ENCODE measurements at regions of chr1 and their contacts with region 1.

Region 1: DNA sequence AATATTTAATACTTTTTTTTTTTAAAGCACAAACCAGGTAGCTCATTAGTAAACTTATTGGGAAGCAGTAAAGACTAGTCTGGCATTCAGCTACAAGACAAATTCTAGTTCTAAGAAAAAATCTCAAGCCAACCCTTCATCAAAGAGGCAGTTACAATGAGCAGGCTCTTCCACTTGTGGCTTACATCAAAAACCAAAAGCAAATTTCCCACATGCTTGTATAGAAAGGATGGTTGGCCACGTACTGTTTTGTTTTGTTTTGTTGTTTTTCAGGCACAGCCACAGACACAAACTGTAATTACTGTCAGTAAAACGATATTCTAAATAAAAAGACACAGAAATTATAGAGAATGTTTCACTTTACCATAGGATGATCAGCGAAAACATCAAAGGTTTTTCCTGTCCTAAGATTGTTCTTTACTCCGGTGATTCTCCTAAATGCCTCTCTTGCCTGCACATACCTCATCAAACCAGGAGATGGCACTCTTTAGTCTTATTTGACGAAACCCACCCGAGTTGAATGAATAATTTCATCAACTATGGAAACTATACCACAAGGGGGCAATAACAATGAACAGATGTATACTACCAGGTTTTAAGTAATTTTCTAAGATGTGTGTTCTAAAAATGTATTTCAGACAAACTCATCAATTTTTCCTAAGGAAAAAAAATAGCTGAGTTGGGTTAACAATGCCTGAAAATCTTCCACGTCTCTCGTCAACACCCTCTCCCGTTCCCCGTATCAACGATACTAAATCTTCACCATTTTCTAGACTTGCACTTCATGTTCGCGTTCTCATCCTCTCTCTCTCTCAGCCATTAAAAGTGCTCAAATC is 26.9 kb downstream of the RPL5 start:
- DNase-seq: peak; percentile 62
- H3K4me3 ChIP-seq: no peak overlapping the region
- H3K27ac ChIP-seq: no peak overlapping the region
- H3K27me3 ChIP-seq: no peaks in the 10 kb centered on the region
- CTCF ChIP-seq: peak; percentile 92

Region 2: DNA sequence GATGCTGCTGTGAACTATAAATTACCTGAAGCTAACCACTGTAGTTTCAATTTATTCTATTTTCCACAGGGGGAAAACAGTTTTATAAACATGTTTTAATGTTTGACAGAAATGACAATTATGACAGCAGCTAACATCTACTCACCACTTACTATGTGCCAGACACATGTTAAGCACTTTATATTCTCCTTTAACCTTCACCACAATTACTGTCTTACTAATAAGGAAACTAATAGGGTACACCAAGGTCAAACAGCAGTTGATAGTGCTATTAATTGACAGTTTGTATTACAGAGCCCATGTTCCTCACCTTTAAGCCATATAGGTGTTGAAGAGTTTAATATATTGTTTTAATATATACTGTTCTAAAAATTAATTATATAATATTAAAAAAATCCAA is 220.3 kb before region 1 on chr1:
- CTCF ChIA-PET with region 1: no interaction called
- POLR2A ChIA-PET with region 1: no interaction called
- DNase-seq: no peak
- H3K4me3 ChIP-seq: no peak overlapping the region
- H3K27ac ChIP-seq: no peak overlapping the region
- H3K27me3 ChIP-seq: no peaks in the 10 kb centered on the region
- CTCF ChIP-seq: no peak

Region 3: DNA sequence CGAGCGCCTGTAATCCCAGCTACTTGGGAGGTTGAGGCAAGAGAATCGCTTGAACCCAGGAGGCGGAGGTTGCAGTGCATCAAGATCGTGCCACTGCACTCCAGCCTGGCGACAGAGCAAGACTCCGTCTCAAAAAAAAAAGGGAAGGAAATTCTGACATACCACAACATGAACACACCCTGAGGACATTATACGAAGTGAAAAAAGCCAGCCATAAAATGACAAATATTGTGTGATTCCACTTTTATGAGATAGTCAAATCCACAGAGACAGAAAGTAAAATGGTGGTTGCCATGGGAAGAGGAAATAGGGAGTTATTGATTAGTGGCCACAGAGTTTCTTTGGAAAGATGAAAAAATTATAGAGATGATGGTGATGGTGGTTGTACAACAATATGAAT is 115.6 kb before region 1 on chr1:
- CTCF ChIA-PET with region 1: no interaction called
- POLR2A ChIA-PET with region 1: no interaction called
- DNase-seq: no peak
- H3K4me3 ChIP-seq: no peak overlapping the region
- H3K27ac ChIP-seq: no peak overlapping the region
- H3K27me3 ChIP-seq: no peaks in the 10 kb centered on the region
- CTCF ChIP-seq: no peak

Region 4: GRCh38 chr1:92872719-92873118 is 13.9 kb after region 1 on chr1:
- CTCF ChIA-PET with region 1: interaction called, 37 read pairs
- POLR2A ChIA-PET with region 1: no interaction called
- DNase-seq: no peak
- H3K4me3 ChIP-seq: no peak overlapping the region
- H3K27ac ChIP-seq: no peak overlapping the region
- H3K27me3 ChIP-seq: no peaks in the 10 kb centered on the region
- CTCF ChIP-seq: no peak

Region 5: GRCh38 chr1:92909321-92909720 is 50.5 kb after region 1 on chr1:
- CTCF ChIA-PET with region 1: interaction called, 10 read pairs
- POLR2A ChIA-PET with region 1: no interaction called
- DNase-seq: peak; percentile 39
- H3K4me3 ChIP-seq: no peak overlapping the region
- H3K27ac ChIP-seq: no peak overlapping the region
- H3K27me3 ChIP-seq: no peaks in the 10 kb centered on the region
- CTCF ChIP-seq: no peak

Region 6: GRCh38 chr1:92968138-92969032 is 109.6 kb after region 1 on chr1:
- CTCF ChIA-PET with region 1: interaction called, 72 read pairs
- POLR2A ChIA-PET with region 1: no interaction called
- DNase-seq: no peak
- H3K4me3 ChIP-seq: no peak overlapping the region
- H3K27ac ChIP-seq: no peak overlapping the region
- H3K27me3 ChIP-seq: peaks cover 15% of the 10 kb centered on the region
- CTCF ChIP-seq: peak; percentile 66

Region 7: DNA sequence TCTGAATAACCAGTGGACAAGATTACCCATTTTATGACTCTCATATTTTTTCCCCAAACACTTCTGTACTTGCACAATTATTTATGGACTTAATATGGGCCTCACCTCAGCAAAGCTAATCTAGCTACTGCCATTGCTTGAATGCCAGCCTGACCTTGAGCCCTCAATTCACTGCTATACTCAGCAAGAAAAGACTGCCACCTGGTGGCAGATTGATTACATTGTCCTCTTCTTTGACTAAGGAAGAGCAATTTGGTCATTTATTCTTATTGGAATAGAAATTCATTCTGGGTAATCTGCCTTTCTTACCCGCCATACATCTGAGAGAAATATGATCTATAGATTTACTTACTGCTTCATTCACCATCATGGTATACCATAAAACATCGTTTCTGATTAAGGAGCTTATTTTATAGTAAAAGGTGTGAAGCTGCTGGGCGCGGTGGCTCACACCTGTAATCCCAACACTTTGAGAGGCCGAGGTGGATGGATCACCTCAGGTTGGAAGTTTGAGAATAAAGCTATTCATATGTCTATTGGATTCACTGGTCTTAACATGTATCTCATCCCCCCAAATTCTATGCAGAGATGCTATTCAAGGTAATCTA is 135.4 kb after region 1 on chr1:
- CTCF ChIA-PET with region 1: interaction called, 458 read pairs
- POLR2A ChIA-PET with region 1: no interaction called
- DNase-seq: peak; percentile 74
- H3K4me3 ChIP-seq: no peak overlapping the region
- H3K27ac ChIP-seq: no peak overlapping the region
- H3K27me3 ChIP-seq: peaks cover 12% of the 10 kb centered on the region
- CTCF ChIP-seq: peak; percentile 79

Region 8: DNA sequence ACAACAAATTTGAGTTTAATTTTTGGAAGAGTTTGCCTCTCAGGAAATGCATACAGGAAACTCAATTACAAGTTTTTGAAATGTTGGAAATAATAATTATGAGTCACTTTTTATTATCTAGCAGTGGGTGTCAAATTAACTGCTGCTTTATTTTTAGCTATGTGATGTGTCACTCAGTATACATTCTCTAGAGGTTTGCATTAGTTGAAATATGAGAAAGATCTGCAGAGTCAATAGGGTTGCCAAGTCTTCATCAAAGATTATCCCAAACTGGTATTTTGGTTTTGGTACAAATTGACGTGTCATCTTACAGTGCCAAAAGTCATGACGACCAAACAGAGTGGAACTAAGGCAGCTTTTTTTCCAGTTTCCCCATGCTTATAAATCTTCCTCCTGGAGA is 156.8 kb after region 1 on chr1:
- CTCF ChIA-PET with region 1: interaction called, 13 read pairs
- POLR2A ChIA-PET with region 1: no interaction called
- DNase-seq: no peak
- H3K4me3 ChIP-seq: no peak overlapping the region
- H3K27ac ChIP-seq: no peak overlapping the region
- H3K27me3 ChIP-seq: peaks cover 10% of the 10 kb centered on the region
- CTCF ChIP-seq: no peak